ENCODE measurements at regions of chr1 and their contacts with region 1.

Region 1: DNA sequence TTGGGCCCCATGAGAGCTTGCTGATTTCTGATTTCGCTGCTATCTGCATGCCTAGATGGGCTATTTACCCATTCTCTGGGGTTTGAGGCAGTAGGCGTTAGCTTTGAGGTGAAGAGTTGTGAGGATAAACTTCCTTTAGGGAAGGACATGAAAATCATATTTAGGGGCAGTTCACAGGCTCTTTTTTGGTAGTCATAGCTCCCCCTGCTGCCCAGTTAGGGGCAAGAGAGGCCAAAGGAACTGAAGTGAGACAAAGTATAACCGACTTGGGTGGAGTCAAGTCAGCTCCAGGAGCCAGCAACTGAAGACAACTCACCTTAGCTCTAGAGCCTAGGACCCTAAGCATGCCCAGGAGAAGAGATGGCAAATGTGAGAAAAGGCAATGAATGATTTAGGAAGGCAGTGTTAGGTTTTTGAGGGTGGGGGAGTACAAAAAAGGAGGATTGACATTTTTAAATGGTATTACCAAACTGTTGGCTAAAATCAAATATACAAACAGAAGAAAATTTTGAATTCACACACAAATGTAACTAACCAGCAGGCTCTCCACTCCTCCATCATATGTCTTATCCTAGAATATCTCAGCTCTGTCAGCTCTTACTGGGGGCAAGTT is 625.2 kb downstream of the LMO4 start:
- DNase-seq: peak in 3 of 4 donors; percentile 39 to 80 (median 43)
- ATAC-seq: peak; percentile 95
- H3K4me3 ChIP-seq: no peak overlapping the region
- H3K27ac ChIP-seq: no peak overlapping the region
- H3K4me1 ChIP-seq: peaks cover 0 to 5% of the 10 kb centered on the region in 2 donors
- H3K27me3 ChIP-seq: no peaks in the 10 kb centered on the region
- CTCF ChIP-seq: peak; percentile 63 to 82

Region 2: GRCh38 chr1:87328272-87329050 is 625.4 kb before region 1 on chr1 and contains the start of gene LMO4:
- intact Hi-C with region 1: loop called in 1 of 2 experiments (anchors 10 kb)
- DNase-seq: peak; percentile 93 to 98 (median 96)
- ATAC-seq: peak; percentile 76
- H3K4me3 ChIP-seq: peak within 1 kb of the TSS; percentile 73 to 76
- H3K27ac ChIP-seq: peak within 1 kb of the TSS; percentile 97 to 98
- H3K4me1 ChIP-seq: peaks cover 8 to 32% of the 10 kb centered on the region in 2 donors
- H3K27me3 ChIP-seq: no peaks in the 10 kb centered on the region
- CTCF ChIP-seq: no peak
- polyA plus RNA-seq, gene LMO4: 251 to 298 (median 255) TPM

Measured in left lung (tissue), 14 donors.